Gastrocnemius medialis (tissue), 4 donors: ENCODE measurements at regions of chr2 and their contacts with region 1.

Region 1: DNA sequence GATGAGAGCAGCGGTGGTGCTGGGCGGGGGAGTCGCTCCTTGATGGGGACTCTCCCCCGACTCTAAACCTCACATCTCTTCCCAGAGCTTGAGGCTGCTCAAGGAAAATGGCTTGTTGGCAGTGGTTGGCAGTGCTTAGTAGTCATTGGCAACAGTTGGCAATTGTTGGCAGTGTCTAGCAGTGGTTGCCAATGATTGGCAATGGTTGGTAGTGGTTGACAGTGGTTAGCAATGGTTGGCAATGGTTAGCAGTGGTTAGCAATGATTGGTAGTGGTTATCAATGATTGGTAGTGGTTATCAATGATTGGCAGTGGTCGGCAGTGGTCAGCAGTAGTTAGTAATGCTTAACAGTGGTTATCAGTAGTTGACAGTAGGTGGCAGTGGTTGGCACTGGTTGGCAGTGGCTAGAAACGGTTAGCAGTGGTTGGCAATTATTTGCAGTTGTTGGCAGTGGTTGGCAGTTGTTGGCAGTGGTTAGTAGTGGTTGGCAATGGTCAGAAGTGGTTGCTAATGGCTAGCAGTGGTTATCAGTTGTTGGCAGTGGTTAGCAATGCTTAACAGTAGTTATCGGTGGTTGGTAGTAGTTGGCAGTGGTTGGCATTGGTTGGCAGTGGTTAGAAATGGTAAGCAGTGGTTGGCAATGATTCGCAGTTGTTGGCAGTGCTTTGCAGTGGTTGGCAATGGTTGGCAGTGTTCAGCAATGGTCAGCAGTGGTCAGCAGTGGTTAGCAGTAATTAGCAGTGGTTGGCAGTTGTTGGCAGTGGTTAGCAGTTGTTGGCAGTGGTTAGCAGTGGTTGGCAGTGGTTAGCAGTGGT is 85.4 kb upstream of the OTOS start:
- DNase-seq: no peak
- ATAC-seq: no peak
- H3K4me3 ChIP-seq: no peak overlapping the region
- H3K27ac ChIP-seq: no peak overlapping the region
- H3K4me1 ChIP-seq: peaks cover 4 to 7% of the 10 kb centered on the region in 2 donors
- H3K27me3 ChIP-seq: no peaks in the 10 kb centered on the region
- CTCF ChIP-seq: peak in 1 of 5 experiments; percentile 12
- POLR2A ChIP-seq: no peak

Region 2: DNA sequence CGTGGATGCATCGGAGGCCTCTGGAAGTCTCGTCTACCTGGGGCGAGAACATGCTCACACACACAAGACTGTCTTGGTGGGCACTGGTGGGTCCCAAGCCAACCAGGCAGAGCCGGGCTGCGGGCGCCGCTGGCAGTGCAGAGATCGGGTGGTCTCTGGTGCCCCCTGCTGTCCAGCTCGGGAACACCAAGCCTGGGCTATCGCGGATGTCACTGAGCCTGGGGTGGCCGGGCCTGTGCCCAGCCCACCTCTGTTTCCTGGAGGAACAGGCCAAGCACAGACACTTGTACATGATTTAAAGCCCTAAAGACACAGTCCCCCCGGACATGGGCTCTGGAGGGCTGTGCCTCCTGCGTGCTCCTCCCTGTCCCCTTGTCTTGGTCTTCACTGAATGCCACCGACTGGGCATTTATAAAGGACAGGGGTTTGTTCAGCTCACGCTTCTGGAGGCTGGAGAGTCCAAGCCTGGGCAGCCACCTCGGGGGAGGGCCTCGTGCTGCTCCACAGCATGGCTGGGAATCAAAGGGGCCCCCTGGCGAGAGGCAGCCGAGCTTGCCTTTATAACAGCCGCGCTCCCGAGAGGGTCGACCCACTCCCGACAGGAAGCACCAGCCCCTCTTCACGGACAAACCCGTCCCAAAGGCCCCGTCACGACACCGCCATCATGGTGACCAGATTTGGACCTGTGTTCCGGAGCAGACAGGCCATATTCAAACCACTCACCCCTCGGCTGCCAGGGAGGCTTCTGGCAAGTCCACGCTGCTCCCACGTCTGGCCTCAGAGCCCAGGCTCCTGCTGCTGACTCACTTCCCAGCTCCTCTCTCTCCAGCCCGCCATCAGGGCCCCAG is 81.8 kb before region 1 on chr2:
- in situ Hi-C with region 1: no loop called
- intact Hi-C with region 1: no loop called
- DNase-seq: peak; percentile 24 to 50
- ATAC-seq: peak; percentile 77 to 90
- H3K4me3 ChIP-seq: no peak overlapping the region
- H3K27ac ChIP-seq: no peak overlapping the region
- H3K4me1 ChIP-seq: peaks cover 0 to 5% of the 10 kb centered on the region in 2 donors
- H3K27me3 ChIP-seq: no peaks in the 10 kb centered on the region
- CTCF ChIP-seq: peak; percentile 86 to 97 (median 96)
- POLR2A ChIP-seq: no peak

Region 3: GRCh38 chr2:240426797-240427721 is 201.2 kb after region 1 on chr2:
- in situ Hi-C with region 1: loop called in 2 of 4 experiments (anchors 10 to 25 kb)
- intact Hi-C with region 1: no loop called
- DNase-seq: peak in 1 of 2 donors; percentile 7
- ATAC-seq: no peak
- H3K4me3 ChIP-seq: no peak overlapping the region
- H3K27ac ChIP-seq: no peak overlapping the region
- H3K4me1 ChIP-seq: no peaks in the 10 kb centered on the region
- H3K27me3 ChIP-seq: no peaks in the 10 kb centered on the region
- CTCF ChIP-seq: no peak
- POLR2A ChIP-seq: no peak